ENCODE measurements at regions of chr15 and their contacts with region 1.

Region 1: GRCh38 chr15:40338041-40338657 is 2.6 kb downstream of the CCDC9B start:
- DNase-seq: peak; percentile 84
- ATAC-seq: peak; percentile 94
- H3K4me3 ChIP-seq: no peak overlapping the region
- H3K4me3 Mint-ChIP-seq: peak overlapping the region; percentile 37
- H3K27ac ChIP-seq: no peak overlapping the region
- H3K27ac Mint-ChIP-seq: no peak overlapping the region
- H3K4me1 ChIP-seq: peaks cover 21 to 31% of the 10 kb centered on the region in 2 donors
- H3K4me1 Mint-ChIP-seq: peaks cover 24% of the 10 kb centered on the region
- H3K27me3 ChIP-seq: peaks cover 0 to 12% (median 0%) of the 10 kb centered on the region in 4 experiments
- H3K27me3 Mint-ChIP-seq: peaks cover 4% of the 10 kb centered on the region
- CTCF ChIP-seq: peak; percentile 97

Region 2: GRCh38 chr15:39376371-39376909 is 961.7 kb before region 1 on chr15:
- CTCF ChIA-PET with region 1: no interaction called
- POLR2A ChIA-PET with region 1: no interaction called
- intact Hi-C with region 1: no loop called
- DNase-seq: no peak
- ATAC-seq: no peak
- H3K4me3 ChIP-seq: no peak overlapping the region
- H3K4me3 Mint-ChIP-seq: no peak overlapping the region
- H3K27ac ChIP-seq: no peak overlapping the region
- H3K27ac Mint-ChIP-seq: no peak overlapping the region
- H3K4me1 ChIP-seq: no peaks in the 10 kb centered on the region
- H3K4me1 Mint-ChIP-seq: no peaks in the 10 kb centered on the region
- H3K27me3 ChIP-seq: peaks cover 0 to 3% (median 0%) of the 10 kb centered on the region in 4 experiments
- H3K27me3 Mint-ChIP-seq: peaks cover 3% of the 10 kb centered on the region
- CTCF ChIP-seq: no peak

Region 3: DNA sequence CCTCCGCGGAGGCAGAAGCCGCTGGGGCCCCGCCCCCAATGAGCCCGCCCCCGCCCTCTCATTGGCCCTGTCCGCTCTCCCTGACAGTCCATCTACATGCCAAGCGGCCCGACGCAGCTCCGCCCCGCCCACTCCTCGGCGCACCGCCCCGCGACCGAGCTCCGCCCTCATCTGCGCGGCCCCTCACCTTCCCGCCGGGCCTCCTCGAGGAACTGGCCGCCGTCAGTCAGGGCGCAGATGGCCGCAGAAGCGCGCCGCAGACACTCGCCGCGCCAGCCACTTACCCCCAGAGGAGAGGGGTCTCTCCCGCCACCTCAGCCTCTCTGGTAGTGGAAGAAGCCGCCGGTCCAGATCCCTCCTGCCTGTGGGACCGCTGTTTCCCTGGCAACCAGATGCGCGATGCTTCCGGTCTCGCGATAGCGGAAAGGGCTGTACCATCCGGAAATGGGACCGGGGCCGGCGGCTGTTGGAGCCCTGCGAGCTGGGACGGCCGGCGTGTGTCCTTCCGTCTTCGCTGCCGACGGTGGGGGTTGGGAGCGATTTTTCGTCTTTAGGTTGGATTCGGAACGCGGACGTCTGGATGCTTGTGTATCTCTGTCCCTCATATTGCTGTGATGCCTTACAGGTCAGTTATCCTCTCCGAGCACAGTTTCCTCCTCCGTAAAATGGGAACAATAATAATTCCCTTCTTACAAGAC is 555.6 kb before region 1 on chr15 and contains the start of gene FSIP1:
- CTCF ChIA-PET with region 1: interaction called, 11 read pairs
- POLR2A ChIA-PET with region 1: no interaction called
- intact Hi-C with region 1: no loop called
- DNase-seq: peak; percentile 98
- ATAC-seq: peak; percentile 99
- H3K4me3 ChIP-seq: peak within 1 kb of the TSS; percentile 81 to 98 (median 91)
- H3K4me3 Mint-ChIP-seq: peak within 1 kb of the TSS; percentile 85
- H3K27ac ChIP-seq: peak within 1 kb of the TSS; percentile 63 to 83
- H3K27ac Mint-ChIP-seq: peak within 1 kb of the TSS; percentile 97
- H3K4me1 ChIP-seq: peaks cover 17 to 18% of the 10 kb centered on the region in 2 donors
- H3K4me1 Mint-ChIP-seq: peaks cover 43% of the 10 kb centered on the region
- H3K27me3 ChIP-seq: peaks cover 0 to 5% (median under 1%) of the 10 kb centered on the region in 4 experiments
- H3K27me3 Mint-ChIP-seq: peaks cover 5% of the 10 kb centered on the region
- CTCF ChIP-seq: no peak
- total RNA-seq, gene FSIP1: 0.44 and 0.49 TPM in 2 replicates

Region 4: DNA sequence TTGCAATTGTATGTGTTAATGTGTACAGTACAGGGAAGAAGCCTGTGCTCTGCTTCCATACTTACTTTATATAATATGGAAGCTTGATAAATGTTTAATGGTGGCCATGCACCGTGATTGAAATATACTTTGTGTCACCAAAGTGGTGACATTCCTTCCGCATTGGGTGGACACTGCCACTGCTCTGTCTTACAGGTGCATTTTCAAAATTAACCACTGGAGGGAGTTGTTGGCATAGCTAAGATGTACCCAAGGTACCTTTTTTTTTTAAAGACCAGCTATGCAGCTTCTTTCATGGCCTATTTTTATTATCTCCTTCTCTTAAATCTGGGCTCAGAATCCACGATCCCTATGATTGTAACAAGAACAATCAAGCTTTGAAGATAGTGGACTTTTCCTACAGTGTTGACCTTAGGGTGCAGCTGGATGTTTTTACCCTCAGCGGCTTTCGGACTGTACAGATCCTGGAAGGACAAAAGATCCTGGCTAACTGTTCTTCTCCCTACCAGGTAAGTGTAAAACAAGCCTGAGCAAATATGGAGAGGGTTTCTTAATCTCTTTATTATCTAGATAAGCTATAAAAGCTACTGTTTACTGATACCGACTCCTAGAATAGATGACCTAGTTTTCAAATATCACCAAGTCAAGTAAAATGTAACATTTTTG is 120.9 kb before region 1 on chr15:
- CTCF ChIA-PET with region 1: interaction called, 41 read pairs
- POLR2A ChIA-PET with region 1: no interaction called
- intact Hi-C with region 1: loop called (anchors 1 kb)
- DNase-seq: peak; percentile 85
- ATAC-seq: peak; percentile 96
- H3K4me3 ChIP-seq: no peak overlapping the region
- H3K4me3 Mint-ChIP-seq: no peak overlapping the region
- H3K27ac ChIP-seq: no peak overlapping the region
- H3K27ac Mint-ChIP-seq: no peak overlapping the region
- H3K4me1 ChIP-seq: no peaks in the 10 kb centered on the region
- H3K4me1 Mint-ChIP-seq: no peaks in the 10 kb centered on the region
- H3K27me3 ChIP-seq: no peaks in the 10 kb centered on the region
- H3K27me3 Mint-ChIP-seq: no peaks in the 10 kb centered on the region
- CTCF ChIP-seq: peak; percentile 95

Region 5: GRCh38 chr15:40290918-40291574 is 47.1 kb before region 1 on chr15:
- CTCF ChIA-PET with region 1: interaction called, 36 read pairs
- POLR2A ChIA-PET with region 1: no interaction called
- intact Hi-C with region 1: no loop called
- DNase-seq: no peak
- ATAC-seq: no peak
- H3K4me3 ChIP-seq: no peak overlapping the region
- H3K4me3 Mint-ChIP-seq: no peak overlapping the region
- H3K27ac ChIP-seq: no peak overlapping the region
- H3K27ac Mint-ChIP-seq: no peak overlapping the region
- H3K4me1 ChIP-seq: no peaks in the 10 kb centered on the region
- H3K4me1 Mint-ChIP-seq: peaks cover 2% of the 10 kb centered on the region
- H3K27me3 ChIP-seq: no peaks in the 10 kb centered on the region
- H3K27me3 Mint-ChIP-seq: no peaks in the 10 kb centered on the region
- CTCF ChIP-seq: no peak

Region 6: GRCh38 chr15:40323239-40323952 is 14.8 kb before region 1 on chr15 and contains the start of gene INAFM2:
- CTCF ChIA-PET with region 1: interaction called, 221 read pairs
- POLR2A ChIA-PET with region 1: interaction called, 8 read pairs
- intact Hi-C with region 1: loop called (anchors 1 kb)
- DNase-seq: peak; percentile 97
- ATAC-seq: peak; percentile 89
- H3K4me3 ChIP-seq: peak within 1 kb of the TSS; percentile 25 to 71 (median 59)
- H3K4me3 Mint-ChIP-seq: peak within 1 kb of the TSS; percentile 85
- H3K27ac ChIP-seq: peak within 1 kb of the TSS in 1 of 2 donors; percentile 10
- H3K27ac Mint-ChIP-seq: no peak within 1 kb of the TSS
- H3K4me1 ChIP-seq: peaks cover 21 to 26% of the 10 kb centered on the region in 2 donors
- H3K4me1 Mint-ChIP-seq: peaks cover 29% of the 10 kb centered on the region
- H3K27me3 ChIP-seq: peaks cover 0 to 2% (median 0%) of the 10 kb centered on the region in 4 experiments
- H3K27me3 Mint-ChIP-seq: no peaks in the 10 kb centered on the region
- CTCF ChIP-seq: peak; percentile 75
- total RNA-seq, gene INAFM2: 5.3 and 7.0 TPM in 2 replicates

Region 7: GRCh38 chr15:40388946-40389841 is 51.0 kb after region 1 on chr15:
- CTCF ChIA-PET with region 1: no interaction called
- POLR2A ChIA-PET with region 1: no interaction called
- intact Hi-C with region 1: no loop called
- DNase-seq: no peak
- ATAC-seq: no peak
- H3K4me3 ChIP-seq: no peak overlapping the region
- H3K4me3 Mint-ChIP-seq: no peak overlapping the region
- H3K27ac ChIP-seq: no peak overlapping the region
- H3K27ac Mint-ChIP-seq: no peak overlapping the region
- H3K4me1 ChIP-seq: no peaks in the 10 kb centered on the region
- H3K4me1 Mint-ChIP-seq: no peaks in the 10 kb centered on the region
- H3K27me3 ChIP-seq: no peaks in the 10 kb centered on the region
- H3K27me3 Mint-ChIP-seq: no peaks in the 10 kb centered on the region
- CTCF ChIP-seq: no peak

Region 8: DNA sequence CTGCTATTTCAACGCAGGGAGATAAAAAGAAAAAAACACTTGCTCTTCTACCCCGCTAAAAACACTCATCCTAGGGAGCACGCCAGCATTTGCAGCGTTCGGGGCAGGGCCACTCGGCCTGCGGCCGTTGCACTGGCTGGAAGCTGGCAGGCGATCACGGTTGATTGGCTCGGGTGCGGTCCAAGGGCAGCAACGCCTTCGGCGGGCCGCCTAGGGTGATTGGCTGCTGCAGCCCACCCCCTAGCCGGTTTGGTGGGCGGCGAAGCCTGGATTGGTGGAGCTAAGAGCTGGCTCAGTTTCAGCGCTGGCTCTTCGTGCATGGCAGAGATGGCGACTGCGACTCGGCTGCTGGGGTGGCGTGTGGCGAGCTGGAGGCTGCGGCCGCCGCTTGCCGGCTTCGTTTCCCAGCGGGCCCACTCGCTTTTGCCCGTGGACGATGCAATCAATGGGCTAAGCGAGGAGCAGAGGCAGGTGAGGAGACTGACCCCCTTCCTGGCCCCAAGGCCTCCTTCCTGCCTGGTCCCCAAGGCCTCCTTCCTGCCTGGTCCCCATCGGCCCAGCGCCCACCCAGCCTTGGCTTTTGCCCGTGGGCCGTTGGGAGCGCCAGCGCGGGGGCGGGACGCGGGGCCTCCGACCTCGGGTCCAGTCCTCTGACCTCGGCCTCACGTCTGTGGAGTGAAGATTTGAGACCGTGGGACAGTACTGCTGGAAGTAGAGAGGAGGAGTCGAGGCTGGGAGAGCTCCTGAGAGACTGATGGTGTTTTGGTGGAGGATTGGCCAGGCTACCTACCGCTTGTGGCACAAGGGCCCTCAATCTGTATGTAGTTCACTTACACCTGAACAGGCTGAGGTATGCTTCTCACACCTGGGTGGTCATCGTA is 67.6 kb after region 1 on chr15 and contains the start of gene IVD:
- CTCF ChIA-PET with region 1: interaction called, 22 read pairs
- POLR2A ChIA-PET with region 1: no interaction called
- intact Hi-C with region 1: no loop called
- DNase-seq: peak; percentile 84
- ATAC-seq: peak; percentile 97
- H3K4me3 ChIP-seq: peak within 1 kb of the TSS; percentile 52 to 81 (median 70)
- H3K4me3 Mint-ChIP-seq: peak within 1 kb of the TSS; percentile 94
- H3K27ac ChIP-seq: peak within 1 kb of the TSS; percentile 59 to 84
- H3K27ac Mint-ChIP-seq: peak within 1 kb of the TSS; percentile 89
- H3K4me1 ChIP-seq: peaks cover 24 to 29% of the 10 kb centered on the region in 2 donors
- H3K4me1 Mint-ChIP-seq: peaks cover 35% of the 10 kb centered on the region
- H3K27me3 ChIP-seq: no peaks in the 10 kb centered on the region
- H3K27me3 Mint-ChIP-seq: no peaks in the 10 kb centered on the region
- CTCF ChIP-seq: no peak
- total RNA-seq, gene IVD: 106 and 114 TPM in 2 replicates

Measured in B cell (primary cell).